ENCODE measurements at regions of chr4 and their contacts with region 1.

Region 1: DNA sequence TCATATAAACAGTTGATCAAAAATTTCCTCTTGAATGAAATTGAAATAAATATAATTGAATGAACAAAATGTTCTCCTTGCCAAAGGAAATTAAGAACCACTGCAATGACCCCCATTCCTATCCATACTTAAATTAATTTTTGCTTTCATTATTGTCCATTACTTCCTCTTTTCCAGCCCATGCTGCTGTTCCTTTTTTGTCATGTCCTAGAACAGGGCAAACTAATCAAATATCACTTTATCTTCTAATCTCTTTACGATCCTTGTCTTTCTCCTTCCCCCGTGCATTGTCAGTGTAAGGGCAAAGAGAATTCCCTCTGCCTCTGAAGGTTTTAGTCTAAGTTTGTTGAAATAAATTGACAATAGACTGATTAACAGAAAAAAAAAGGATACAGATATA is 203.0 kb downstream of the CENPC start:
- DNase-seq: no peak
- H3K4me3 ChIP-seq: no peak overlapping the region
- H3K27ac ChIP-seq: no peak overlapping the region
- H3K27me3 ChIP-seq: no peaks in the 10 kb centered on the region
- CTCF ChIP-seq: no peak

Region 2: DNA sequence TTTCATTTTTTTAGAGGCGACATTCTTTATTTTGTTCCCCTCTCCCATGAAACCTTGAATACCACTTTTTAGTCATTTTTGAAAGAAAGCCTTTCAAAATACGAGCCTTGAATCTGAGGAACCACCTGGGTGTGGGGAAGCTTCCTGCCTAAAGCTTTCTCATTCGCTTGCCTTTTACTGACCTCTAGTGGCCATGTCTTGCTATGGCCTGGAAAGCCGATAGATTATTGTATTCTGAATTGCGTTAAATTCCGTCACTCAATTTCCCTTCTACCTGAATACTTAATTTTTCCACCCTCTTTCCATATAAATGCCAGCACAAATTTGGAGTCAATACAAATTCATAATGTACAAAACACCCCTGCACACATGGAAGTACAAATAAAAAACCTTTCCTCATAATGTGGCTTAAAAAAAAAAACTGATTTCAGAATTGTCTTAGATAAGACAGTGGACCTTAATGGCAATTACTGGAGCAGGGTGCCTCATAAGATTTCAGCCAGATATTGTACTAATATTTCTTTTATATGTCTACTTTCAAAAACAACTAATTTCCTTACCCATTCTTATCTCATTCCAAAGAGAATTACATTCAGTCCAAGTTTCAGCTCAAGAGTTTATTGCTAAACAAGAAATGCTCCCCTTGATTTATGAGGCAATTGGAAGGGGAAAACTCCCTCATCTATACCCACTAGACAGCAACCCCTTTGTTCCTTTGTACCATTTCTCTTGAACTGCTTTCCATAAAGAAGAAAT is 14.9 kb before region 1 on chr4:
- CTCF ChIA-PET with region 1: interaction called, 21 read pairs
- POLR2A ChIA-PET with region 1: no interaction called
- DNase-seq: peak; percentile 6
- H3K4me3 ChIP-seq: no peak overlapping the region
- H3K27ac ChIP-seq: no peak overlapping the region
- H3K27me3 ChIP-seq: no peaks in the 10 kb centered on the region
- CTCF ChIP-seq: peak; percentile 97

Region 3: GRCh38 chr4:67483868-67484602 is 141.7 kb after region 1 on chr4:
- CTCF ChIA-PET with region 1: no interaction called
- POLR2A ChIA-PET with region 1: no interaction called
- DNase-seq: no peak
- H3K4me3 ChIP-seq: no peak overlapping the region
- H3K27ac ChIP-seq: peak overlapping the region; percentile 42
- H3K27me3 ChIP-seq: no peaks in the 10 kb centered on the region
- CTCF ChIP-seq: no peak